Motor neuron (in vitro differentiated cells): ENCODE measurements at regions of chr3 and their contacts with region 1.

Region 1: DNA sequence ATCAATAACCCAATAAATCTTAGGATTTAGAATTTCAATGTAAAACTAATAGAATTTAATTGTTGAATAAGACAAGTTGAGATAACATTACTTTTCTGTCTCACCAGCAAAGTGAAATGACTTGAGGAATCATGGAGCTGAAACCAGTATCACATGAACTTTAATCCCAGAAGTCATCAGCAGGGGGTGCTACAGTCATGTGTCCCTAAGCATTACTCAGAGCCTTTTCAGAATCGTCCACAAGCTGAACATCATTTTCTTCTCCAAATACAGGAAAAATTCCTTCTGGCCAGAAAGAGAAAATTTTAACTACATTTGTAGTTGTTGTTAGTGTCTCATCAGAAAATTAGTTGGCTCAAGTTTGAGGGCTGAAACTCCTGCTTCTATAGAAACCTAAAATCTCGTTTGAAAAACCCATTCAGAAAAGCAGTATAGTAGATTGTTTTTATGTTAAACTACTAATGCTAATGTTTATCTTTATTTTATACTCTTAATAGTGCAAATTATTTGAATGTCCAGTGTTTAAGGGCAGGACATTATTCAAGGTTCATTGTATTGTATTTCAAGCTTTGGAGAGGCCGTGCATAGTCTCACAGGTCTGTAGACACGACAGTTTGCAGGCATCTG is 384.1 kb downstream of the PLOD2 start:
- ATAC-seq: peak in 3 of 8 experiments; percentile 51 to 76 (median 60)
- H3K4me3 ChIP-seq: no peak overlapping the region
- H3K27ac ChIP-seq: no peak overlapping the region
- H3K4me1 ChIP-seq: no peaks in the 10 kb centered on the region

Region 2: DNA sequence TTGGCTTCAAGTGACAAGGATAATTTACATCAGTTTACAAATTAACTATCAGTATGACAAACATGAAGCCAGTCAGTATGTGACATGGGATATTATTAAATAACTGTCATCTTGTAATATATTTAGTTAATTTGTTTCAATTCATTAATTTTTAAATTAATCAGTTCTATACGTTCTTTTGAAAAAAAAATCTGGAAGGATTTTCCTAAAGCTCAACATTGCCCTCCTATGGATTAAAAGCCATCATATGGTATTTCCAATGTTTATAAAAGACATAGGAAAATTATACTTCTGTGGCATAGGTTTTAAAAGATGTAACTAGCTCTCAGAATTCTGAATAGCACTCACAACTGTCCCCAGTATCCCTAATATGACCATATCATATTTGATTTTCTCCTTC is 249.7 kb after region 1 on chr3:
- in situ Hi-C with region 1: loop called in 1 of 9 experiments (anchors 25 kb)
- ATAC-seq: no peak
- H3K4me3 ChIP-seq: no peak overlapping the region
- H3K27ac ChIP-seq: no peak overlapping the region
- H3K4me1 ChIP-seq: no peaks in the 10 kb centered on the region